T-cell (primary cell): ENCODE measurements at regions of chr11 and their contacts with region 1.

Region 1: GRCh38 chr11:10208131-10208575 is 85.9 kb downstream of the SBF2 start:
- DNase-seq: peak in 2 of 35 experiments; percentile 6 to 70
- ATAC-seq: peak in 3 of 4 experiments; percentile 34 to 58 (median 46)
- H3K4me3 ChIP-seq: no peak overlapping the region
- H3K4me3 Mint-ChIP-seq: no peak overlapping the region
- H3K27ac ChIP-seq: no peak overlapping the region
- H3K27ac Mint-ChIP-seq: no peak overlapping the region
- H3K4me1 ChIP-seq: no peaks in the 10 kb centered on the region
- H3K4me1 Mint-ChIP-seq: no peaks in the 10 kb centered on the region
- H3K27me3 ChIP-seq: no peaks in the 10 kb centered on the region
- H3K27me3 Mint-ChIP-seq: no peaks in the 10 kb centered on the region

Region 2: GRCh38 chr11:10197091-10197490 is 11.1 kb before region 1 on chr11:
- CTCF ChIA-PET with region 1: no interaction called
- POLR2A ChIA-PET with region 1: no interaction called
- DNase-seq: no peak
- ATAC-seq: no peak
- H3K4me3 ChIP-seq: no peak overlapping the region
- H3K4me3 Mint-ChIP-seq: no peak overlapping the region
- H3K27ac ChIP-seq: no peak overlapping the region
- H3K27ac Mint-ChIP-seq: no peak overlapping the region
- H3K4me1 ChIP-seq: no peaks in the 10 kb centered on the region
- H3K4me1 Mint-ChIP-seq: no peaks in the 10 kb centered on the region
- H3K27me3 ChIP-seq: no peaks in the 10 kb centered on the region
- H3K27me3 Mint-ChIP-seq: no peaks in the 10 kb centered on the region

Region 3: GRCh38 chr11:10307442-10308207 is 99.5 kb after region 1 on chr11:
- CTCF ChIA-PET with region 1: interaction called, 4 to 47 read pairs
- POLR2A ChIA-PET with region 1: interaction called in 1 of 2 experiments, 7 read pairs
- DNase-seq: peak; percentile 46 to 92 (median 74)
- ATAC-seq: peak; percentile 68 to 77 (median 68)
- H3K4me3 ChIP-seq: peak overlapping the region; percentile 71 to 93
- H3K4me3 Mint-ChIP-seq: peak overlapping the region; percentile 83 to 99 (median 90)
- H3K27ac ChIP-seq: no peak overlapping the region
- H3K27ac Mint-ChIP-seq: no peak overlapping the region
- H3K4me1 ChIP-seq: peaks cover 32 to 54% of the 10 kb centered on the region in 2 experiments
- H3K4me1 Mint-ChIP-seq: peaks cover 35 to 47% (median 42%) of the 10 kb centered on the region in 3 donors
- H3K27me3 ChIP-seq: peaks cover 4 to 68% of the 10 kb centered on the region in 2 experiments
- H3K27me3 Mint-ChIP-seq: peaks cover 21 to 45% of the 10 kb centered on the region in 2 donors